MCF 10A (cell line): ENCODE measurements at regions of chr9 and their contacts with region 1.

Region 1: GRCh38 chr9:134171316-134172197 is 7.2 kb upstream of the RNU6ATAC start:
- DNase-seq: peak; percentile 49
- H3K4me3 Mint-ChIP-seq: no peak overlapping the region
- H3K27ac Mint-ChIP-seq: no peak overlapping the region
- H3K4me1 Mint-ChIP-seq: peaks cover 13% of the 10 kb centered on the region
- H3K27me3 Mint-ChIP-seq: peaks cover 5% of the 10 kb centered on the region
- CTCF ChIP-seq: no peak

Region 2: DNA sequence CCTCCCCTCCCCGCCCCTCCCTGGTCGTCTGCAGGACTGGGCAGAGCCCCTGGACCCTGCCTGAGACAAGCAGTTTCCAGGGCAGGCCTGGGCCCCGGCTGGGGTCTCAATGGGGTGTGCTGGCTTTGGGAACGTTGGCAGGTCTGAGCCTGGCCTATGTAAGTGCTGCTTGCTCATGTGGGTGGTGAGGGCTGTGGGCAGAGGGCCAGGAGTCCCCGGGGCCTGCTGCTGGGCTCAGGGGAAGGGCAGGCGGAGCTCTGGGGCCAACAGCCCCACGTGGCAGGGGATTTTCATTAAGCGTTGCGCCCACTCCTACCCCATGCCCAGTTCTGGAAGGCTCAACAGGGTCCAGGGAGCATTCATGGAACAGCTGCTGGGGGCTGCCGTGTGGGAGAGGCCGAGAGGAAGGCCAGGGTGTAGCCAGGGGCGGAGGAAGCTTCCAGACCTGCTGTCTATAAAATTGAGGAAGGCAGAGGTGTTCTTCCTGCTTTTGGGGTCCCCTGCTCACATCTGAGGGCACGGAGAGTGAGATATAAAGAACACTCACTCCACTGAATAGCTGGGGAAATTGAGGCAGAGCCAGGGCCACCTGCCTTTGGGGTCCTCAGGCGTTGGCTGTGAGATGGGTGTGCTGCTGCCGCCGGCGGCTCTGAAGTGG is 187.2 kb after region 1 on chr9:
- CTCF ChIA-PET with region 1: interaction called, 11 read pairs
- POLR2A ChIA-PET with region 1: interaction called, 6 read pairs
- intact Hi-C with region 1: no loop called
- DNase-seq: peak; percentile 76
- H3K4me3 Mint-ChIP-seq: peak overlapping the region; percentile 53
- H3K27ac Mint-ChIP-seq: peak overlapping the region; percentile 95
- H3K4me1 Mint-ChIP-seq: peaks cover 51% of the 10 kb centered on the region
- H3K27me3 Mint-ChIP-seq: no peaks in the 10 kb centered on the region
- CTCF ChIP-seq: no peak

Region 3: DNA sequence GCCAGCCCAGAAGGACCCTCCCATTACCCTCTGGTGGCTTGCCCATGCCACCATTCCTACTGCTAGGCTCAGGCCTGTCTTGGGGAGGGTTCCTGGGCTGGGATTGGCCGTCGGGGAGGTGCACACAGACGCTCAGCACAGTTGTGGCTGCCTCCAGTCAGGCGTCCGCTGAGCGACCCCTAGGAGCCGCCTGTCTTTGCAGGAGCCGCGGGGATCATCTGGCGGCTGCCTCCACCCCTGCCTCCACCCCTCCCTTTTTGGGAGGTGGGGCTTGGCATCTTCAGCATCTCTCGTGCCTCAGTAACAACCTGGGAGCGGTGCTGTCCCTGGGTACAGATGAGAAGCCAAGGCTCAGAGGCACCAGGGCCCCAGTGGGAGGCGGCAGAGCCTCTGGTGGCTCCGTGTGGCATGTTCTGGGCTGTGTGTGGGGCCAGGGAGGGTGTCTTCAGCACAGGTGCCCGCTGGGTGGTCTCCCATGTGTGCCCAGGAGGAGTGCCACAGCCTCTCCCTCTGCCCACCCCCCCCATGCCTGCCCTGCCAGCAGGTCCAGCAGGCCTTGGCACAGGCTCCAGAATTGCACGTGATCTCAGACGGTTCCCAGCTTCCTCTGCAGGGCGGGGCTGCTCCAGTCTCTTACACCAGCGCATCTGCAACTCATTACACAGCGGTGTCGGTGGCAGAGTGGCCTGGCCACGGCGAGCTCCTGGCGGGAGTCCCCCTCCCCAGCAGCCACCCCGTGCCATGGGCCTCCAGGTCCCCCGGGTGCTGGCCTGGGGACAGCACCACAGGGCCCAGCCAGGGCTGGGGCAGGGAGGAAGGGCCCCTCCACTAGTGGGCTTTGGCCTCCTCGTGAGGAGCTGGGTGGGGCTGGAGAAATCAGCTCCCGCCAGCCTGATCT is 194.5 kb after region 1 on chr9:
- CTCF ChIA-PET with region 1: interaction called, 11 read pairs
- POLR2A ChIA-PET with region 1: interaction called, 4 read pairs
- intact Hi-C with region 1: no loop called
- DNase-seq: peak; percentile 95
- H3K4me3 Mint-ChIP-seq: peak overlapping the region; percentile 38
- H3K27ac Mint-ChIP-seq: peak overlapping the region; percentile 69
- H3K4me1 Mint-ChIP-seq: peaks cover 35% of the 10 kb centered on the region
- H3K27me3 Mint-ChIP-seq: no peaks in the 10 kb centered on the region
- CTCF ChIP-seq: no peak

Region 4: GRCh38 chr9:134391314-134392231 is 220.0 kb after region 1 on chr9:
- CTCF ChIA-PET with region 1: no interaction called
- POLR2A ChIA-PET with region 1: no interaction called
- intact Hi-C with region 1: no loop called
- DNase-seq: no peak
- H3K4me3 Mint-ChIP-seq: no peak overlapping the region
- H3K27ac Mint-ChIP-seq: no peak overlapping the region
- H3K4me1 Mint-ChIP-seq: peaks cover 16% of the 10 kb centered on the region
- H3K27me3 Mint-ChIP-seq: no peaks in the 10 kb centered on the region
- CTCF ChIP-seq: no peak

Region 5: GRCh38 chr9:134413890-134414731 is 242.6 kb after region 1 on chr9:
- CTCF ChIA-PET with region 1: interaction called, 15 read pairs
- POLR2A ChIA-PET with region 1: no interaction called
- intact Hi-C with region 1: no loop called
- DNase-seq: peak; percentile 83
- H3K4me3 Mint-ChIP-seq: no peak overlapping the region
- H3K27ac Mint-ChIP-seq: peak overlapping the region; percentile 50
- H3K4me1 Mint-ChIP-seq: peaks cover 22% of the 10 kb centered on the region
- H3K27me3 Mint-ChIP-seq: no peaks in the 10 kb centered on the region
- CTCF ChIP-seq: no peak

Region 6: DNA sequence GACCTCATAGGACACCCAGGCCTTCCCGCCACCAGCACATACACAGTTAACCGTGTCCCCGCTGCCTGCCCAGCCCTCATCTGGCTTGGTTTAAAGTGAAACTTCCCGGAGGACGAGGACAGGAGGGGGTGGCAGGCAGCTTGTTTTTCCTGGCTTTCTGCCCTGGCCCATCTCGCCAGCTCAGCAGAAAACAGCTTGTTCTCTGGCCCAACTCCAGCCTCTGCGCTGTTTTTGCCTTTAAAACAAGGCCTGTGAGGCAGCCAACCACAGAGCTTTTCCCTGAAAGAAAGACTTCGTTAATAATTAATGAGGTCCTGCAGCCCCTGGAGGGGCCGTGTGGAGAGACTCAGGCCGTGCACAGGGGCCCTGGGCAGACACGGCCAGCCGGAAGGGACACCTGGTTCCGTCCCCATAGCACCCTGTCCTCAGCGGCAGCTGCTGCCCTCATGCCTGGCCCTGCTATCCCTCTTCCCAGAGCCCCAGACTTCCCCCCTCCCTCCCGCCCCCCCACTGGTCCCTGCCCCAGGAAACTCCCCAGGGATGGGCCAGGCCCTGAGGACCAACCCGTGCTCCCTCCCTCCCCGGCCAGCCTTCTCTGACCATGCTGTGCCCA is 263.4 kb after region 1 on chr9:
- CTCF ChIA-PET with region 1: interaction called, 20 read pairs
- POLR2A ChIA-PET with region 1: interaction called, 5 read pairs
- intact Hi-C with region 1: no loop called
- DNase-seq: peak; percentile 97
- H3K4me3 Mint-ChIP-seq: peak overlapping the region; percentile 33
- H3K27ac Mint-ChIP-seq: peak overlapping the region; percentile 65
- H3K4me1 Mint-ChIP-seq: peaks cover 30% of the 10 kb centered on the region
- H3K27me3 Mint-ChIP-seq: no peaks in the 10 kb centered on the region
- CTCF ChIP-seq: no peak

Region 7: DNA sequence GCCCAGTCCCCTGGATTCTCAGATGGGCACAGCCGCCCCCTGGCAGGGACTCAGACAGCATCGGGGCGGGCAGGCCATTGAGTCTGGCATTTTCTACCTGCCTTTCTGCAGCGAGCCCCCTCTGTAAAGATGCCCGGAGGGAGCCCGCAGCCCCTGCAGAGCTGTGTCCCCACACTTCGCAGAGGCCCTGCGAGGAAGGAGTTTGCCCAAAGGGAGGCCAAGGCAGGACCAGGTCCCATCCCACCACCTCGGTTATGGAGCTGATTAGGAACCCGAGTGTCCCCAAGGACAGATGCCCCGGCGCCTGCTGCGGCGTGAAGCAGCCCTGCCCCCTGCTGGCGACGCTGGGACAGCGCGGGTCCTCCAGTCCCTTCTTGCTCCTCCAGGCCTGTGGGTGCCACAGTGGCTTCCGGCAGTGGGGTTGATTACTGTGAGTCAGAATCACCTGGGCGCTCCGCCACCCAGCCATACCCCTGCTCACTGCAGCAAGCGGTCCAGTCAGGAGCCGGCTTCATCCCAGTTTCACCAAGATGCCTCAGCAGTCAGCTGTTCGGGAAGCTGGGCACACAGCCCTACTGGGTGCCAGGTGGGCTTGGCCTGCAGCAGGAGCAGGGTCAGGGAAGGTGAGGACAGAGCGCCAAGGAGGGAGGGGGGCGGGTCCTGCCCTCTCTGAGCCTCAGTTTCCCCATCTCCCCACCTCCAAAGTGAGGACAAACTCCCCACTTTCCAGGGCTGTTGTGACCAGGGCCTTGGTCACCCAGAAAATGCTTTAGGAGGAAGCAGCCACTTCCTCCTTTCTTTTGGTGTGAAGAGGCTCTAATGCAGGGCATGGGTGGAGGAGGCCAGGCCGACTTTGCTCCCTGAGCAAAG is 271.8 kb after region 1 on chr9:
- CTCF ChIA-PET with region 1: interaction called, 45 read pairs
- POLR2A ChIA-PET with region 1: interaction called, 11 read pairs
- intact Hi-C with region 1: loop called (anchors 1 kb)
- DNase-seq: peak; percentile 95
- H3K4me3 Mint-ChIP-seq: no peak overlapping the region
- H3K27ac Mint-ChIP-seq: no peak overlapping the region
- H3K4me1 Mint-ChIP-seq: peaks cover 12% of the 10 kb centered on the region
- H3K27me3 Mint-ChIP-seq: no peaks in the 10 kb centered on the region
- CTCF ChIP-seq: peak; percentile 97